ENCODE measurements at regions of chr13 and their contacts with region 1.

Region 1: DNA sequence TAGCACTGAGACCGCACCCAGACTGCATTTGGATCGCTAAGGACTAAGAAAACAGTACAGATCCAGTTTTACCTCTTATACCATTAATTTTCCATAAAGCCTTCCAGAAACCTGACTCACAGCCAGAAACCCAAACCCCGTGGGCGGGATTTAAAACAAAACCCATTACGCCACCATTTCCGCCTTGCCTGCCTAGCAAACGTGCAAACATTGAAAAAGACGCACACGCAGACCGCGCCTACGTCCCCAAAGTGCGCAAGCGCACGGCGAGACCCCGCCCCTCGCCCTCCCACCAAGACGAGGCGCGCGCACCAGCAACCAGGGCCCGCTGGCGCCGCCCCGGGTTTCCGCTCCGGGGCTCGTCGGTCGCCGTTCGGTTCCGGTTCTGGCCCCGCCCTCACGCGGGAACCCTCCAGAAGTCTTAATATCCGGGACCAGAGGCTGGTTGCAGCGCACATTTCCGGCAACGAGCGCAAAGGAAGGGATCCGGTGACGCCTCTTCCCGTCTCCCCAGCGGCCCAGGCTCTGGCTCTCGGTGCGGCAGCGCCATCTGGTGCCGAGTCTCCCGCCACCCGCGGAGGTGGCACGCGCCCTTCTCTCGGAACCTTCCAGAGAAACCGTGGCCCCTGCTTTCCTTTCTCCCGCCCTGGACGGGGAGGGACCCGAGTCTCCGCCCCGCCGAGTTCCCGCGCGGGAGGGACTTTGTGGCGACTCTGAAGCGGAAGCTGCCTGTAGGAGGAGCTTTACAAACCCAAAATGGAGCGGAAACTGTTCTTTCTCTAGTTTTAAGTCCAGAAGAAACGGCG is 256.9 kb upstream of the STARD13 start:
- DNase-seq: peak; percentile 98
- H3K4me3 Mint-ChIP-seq: peak overlapping the region; percentile 79
- H3K27ac Mint-ChIP-seq: peak overlapping the region; percentile 99
- H3K4me1 Mint-ChIP-seq: peaks cover 54% of the 10 kb centered on the region
- H3K27me3 Mint-ChIP-seq: no peaks in the 10 kb centered on the region

Region 2: DNA sequence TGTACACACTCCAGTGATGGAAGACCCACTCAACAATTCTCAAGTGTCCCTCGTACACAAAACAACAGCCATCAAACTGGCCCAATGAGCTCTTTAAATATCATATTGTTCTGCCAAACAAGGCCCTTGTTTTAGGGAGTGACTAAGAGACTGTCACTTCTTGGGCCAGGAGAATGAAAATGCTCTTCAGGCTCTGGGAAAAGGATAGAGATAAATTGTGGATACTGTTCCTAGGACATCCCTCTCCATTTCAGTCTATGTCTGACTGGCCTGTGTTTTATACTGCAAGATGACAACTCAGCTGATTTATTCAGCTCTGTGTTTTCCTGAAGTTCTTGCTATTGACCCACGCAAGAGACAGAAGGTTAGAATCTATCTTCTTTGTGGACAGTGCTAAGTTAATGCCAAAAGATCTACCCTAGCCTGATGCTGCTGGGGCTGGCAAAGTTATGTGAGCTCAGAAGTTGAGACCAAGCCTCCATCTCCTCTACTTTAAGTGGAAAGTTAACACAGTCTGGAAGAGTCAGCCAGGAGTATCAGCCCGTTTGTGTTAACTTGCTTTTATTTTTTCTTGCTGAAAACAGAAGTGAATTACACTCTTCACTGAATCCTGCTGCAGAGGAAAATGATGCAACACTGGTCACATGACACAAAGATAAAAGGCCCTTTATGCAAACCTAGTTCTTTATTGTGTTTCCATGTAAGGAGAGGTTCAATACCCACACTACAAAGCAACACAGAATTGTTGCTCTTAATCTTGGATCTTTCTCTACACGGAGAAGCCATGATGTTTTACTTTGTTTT is 1496.3 kb before region 1 on chr13:
- CTCF ChIA-PET with region 1: no interaction called
- intact Hi-C with region 1: loop called (anchors 5 kb)
- DNase-seq: peak; percentile 61
- H3K4me3 Mint-ChIP-seq: peak overlapping the region; percentile 55
- H3K27ac Mint-ChIP-seq: peak overlapping the region; percentile 93
- H3K4me1 Mint-ChIP-seq: peaks cover 69% of the 10 kb centered on the region
- H3K27me3 Mint-ChIP-seq: no peaks in the 10 kb centered on the region

Region 3: DNA sequence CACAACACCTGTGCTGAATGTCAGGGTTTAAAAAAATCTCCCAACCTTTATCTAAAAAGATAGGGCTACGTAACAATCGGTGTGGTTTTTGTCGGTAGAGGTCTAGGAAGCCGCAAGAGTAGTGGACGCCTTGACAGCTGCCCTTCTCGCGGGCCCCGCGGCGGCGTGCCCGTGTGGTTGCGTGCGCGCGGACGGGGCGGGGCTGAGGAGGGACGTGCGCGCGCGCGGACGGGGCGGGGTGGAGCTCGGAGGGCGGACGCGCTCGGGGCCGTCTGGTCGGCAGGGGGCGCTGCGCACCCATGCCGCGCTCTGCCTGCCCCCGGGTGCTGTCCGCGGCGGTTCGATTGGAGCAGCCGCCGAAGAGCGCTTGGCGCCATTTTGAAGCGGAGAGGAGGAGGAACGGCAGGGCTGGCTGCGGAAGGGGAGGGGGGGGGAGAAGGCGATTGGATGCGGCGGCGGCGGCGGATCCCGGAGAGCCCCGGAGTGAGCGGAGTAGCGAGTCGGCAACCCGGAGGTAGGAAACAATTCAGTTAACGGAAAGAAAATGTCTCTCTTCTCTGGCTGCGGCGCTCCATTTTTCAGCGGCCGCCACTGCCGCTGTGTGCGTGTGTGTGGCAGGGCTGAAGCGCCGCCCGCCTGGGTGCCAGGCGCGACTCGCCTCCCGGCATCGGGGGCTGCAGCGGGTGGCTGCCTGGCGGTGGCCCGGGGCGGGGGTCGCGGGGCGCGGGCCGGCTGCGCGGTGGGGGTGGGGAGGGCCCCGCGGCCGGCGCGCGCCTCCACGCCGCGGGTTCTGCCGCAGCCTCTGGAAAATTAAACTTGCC is 956.2 kb before region 1 on chr13 and contains the start of gene PDS5B:
- CTCF ChIA-PET with region 1: interaction called, 3 read pairs
- intact Hi-C with region 1: loop called (anchors 1 kb)
- DNase-seq: peak; percentile 95
- H3K4me3 Mint-ChIP-seq: peak within 1 kb of the TSS; percentile 95
- H3K27ac Mint-ChIP-seq: peak within 1 kb of the TSS; percentile 91
- H3K4me1 Mint-ChIP-seq: peaks cover 36% of the 10 kb centered on the region
- H3K27me3 Mint-ChIP-seq: no peaks in the 10 kb centered on the region
- total RNA-seq, gene PDS5B: 48.0 to 51.6 TPM

Region 4: DNA sequence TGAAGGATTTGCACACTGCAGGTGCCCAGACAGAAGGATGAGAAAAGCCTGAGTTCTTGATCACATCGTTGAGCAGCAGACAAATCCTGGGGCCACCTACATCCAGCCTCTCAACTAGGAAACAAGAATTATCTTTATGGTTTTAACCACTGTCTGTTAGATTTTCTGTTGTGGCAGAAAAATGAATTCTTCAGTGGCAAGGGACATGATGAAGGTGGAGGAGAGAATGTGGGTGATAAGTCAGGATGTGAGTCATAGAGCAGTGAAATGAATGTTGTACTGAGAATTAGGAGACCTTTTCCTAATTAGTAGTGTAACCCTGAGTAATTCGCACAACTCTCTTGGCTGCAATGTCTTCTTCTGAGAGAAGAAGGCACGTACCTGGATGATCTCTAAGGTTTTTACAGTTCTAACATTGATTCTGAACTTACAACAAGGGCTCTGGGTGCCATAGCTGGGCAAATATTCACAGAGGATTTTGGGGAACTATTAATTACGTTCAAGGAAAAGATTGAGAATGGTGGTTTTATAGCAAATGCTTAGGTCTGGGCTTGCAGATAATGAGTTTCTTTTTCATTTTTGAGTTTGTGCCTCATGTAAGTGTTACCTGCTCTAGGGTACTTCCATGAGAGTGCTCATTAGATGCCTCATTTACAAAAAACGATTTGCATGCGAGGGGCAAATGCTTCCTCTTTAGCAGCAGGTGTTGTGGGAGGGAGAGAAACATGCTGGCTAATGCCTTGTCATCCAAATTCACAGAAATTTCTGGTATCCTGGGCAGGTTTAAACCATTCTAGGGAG is 637.2 kb before region 1 on chr13:
- CTCF ChIA-PET with region 1: no interaction called
- intact Hi-C with region 1: loop called (anchors 1 kb)
- DNase-seq: peak; percentile 54
- H3K4me3 Mint-ChIP-seq: peak overlapping the region; percentile 51
- H3K27ac Mint-ChIP-seq: peak overlapping the region; percentile 86
- H3K4me1 Mint-ChIP-seq: peaks cover 29% of the 10 kb centered on the region
- H3K27me3 Mint-ChIP-seq: no peaks in the 10 kb centered on the region

Region 5: DNA sequence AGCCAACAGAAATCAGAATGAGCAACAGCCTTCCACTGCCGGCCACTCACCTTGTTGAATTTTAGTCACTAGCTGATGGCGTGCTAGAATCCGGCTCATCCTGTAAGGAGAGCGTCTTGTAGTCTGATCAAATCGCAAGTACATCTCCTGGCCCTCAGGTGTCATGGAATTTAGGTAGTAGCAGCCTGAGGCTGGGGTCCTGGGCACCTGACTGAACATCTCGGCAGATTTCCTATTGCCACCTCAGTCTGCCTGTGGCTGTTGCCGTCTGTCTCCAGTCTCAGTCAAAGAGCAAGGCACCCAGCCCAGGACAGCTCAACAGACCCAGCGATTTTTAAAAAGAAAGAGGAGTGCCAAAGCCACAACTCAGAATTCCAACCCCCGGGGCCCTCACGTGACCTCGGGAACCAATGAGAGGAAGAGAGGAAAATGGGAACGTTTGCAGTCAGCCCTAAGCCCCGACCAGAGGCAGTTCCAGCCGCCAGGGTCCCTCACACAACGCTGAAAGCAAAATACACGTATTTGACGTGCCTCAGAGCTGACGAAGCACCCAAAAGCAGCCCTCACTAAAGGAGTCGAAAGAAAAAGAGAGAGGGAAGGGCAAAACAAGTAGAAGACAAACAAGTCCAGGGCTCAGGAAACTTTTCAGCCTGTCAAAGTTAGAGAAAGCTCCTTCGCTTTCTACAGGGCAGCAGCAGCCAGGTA is 256.9 kb before region 1 on chr13 and contains the start of gene STARD13:
- CTCF ChIA-PET with region 1: no interaction called
- intact Hi-C with region 1: loop called (anchors 1 kb)
- DNase-seq: peak; percentile 27
- H3K4me3 Mint-ChIP-seq: peak within 1 kb of the TSS; percentile 73
- H3K27ac Mint-ChIP-seq: no peak within 1 kb of the TSS
- H3K4me1 Mint-ChIP-seq: peaks cover 14% of the 10 kb centered on the region
- H3K27me3 Mint-ChIP-seq: peaks cover 53% of the 10 kb centered on the region
- total RNA-seq, gene STARD13: 0.30 to 0.31 TPM

Region 6: DNA sequence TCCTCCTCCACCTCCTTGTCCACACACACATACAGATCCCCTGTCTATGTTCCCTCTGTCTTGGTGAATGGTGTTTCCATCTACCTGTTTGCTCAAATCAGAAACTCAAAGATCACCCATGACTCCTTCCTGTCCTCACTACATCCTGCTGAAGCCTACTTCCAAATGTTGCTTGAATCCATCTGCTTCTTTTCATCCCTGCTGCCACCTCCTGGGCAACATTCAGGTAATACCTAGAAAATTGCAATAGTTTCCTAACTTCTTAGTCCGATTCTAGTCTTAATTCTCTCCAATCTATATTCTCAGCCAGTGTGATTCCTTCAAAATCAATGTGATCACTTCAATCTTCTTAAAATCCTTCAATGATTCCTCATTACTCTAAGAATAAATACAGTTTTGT is 101.5 kb before region 1 on chr13:
- CTCF ChIA-PET with region 1: no interaction called
- intact Hi-C with region 1: no loop called
- DNase-seq: no peak
- H3K4me3 Mint-ChIP-seq: no peak overlapping the region
- H3K27ac Mint-ChIP-seq: no peak overlapping the region
- H3K4me1 Mint-ChIP-seq: no peaks in the 10 kb centered on the region
- H3K27me3 Mint-ChIP-seq: peaks cover 9% of the 10 kb centered on the region

Region 7: GRCh38 chr13:33466262-33466661 is 76.2 kb before region 1 on chr13:
- CTCF ChIA-PET with region 1: no interaction called
- intact Hi-C with region 1: no loop called
- DNase-seq: no peak
- H3K4me3 Mint-ChIP-seq: no peak overlapping the region
- H3K27ac Mint-ChIP-seq: no peak overlapping the region
- H3K4me1 Mint-ChIP-seq: no peaks in the 10 kb centered on the region
- H3K27me3 Mint-ChIP-seq: peaks cover 20% of the 10 kb centered on the region

Region 8: GRCh38 chr13:33582121-33582520 is 39.6 kb after region 1 on chr13:
- CTCF ChIA-PET with region 1: no interaction called
- intact Hi-C with region 1: no loop called
- DNase-seq: no peak
- H3K4me3 Mint-ChIP-seq: no peak overlapping the region
- H3K27ac Mint-ChIP-seq: no peak overlapping the region
- H3K4me1 Mint-ChIP-seq: no peaks in the 10 kb centered on the region
- H3K27me3 Mint-ChIP-seq: peaks cover 8% of the 10 kb centered on the region

Region 9: DNA sequence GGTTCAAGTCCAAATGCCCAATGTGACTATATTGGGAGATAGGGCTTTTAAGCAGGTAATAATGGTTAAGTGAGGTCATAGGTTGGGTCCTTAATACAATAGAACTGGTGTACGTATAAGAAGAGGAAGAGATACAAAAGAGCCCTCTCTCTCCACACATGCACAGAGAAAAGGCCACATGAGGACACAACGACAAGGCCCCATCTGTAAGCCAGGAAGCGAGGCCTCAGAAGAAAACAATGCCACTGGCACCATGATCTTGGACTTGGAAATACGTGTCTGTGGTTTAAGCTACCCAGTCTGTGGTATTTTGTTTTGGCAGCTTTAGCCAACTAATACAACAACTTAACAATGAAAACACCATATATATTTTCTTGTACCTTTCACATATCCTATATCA is 252.1 kb after region 1 on chr13:
- CTCF ChIA-PET with region 1: no interaction called
- intact Hi-C with region 1: no loop called
- DNase-seq: no peak
- H3K4me3 Mint-ChIP-seq: no peak overlapping the region
- H3K27ac Mint-ChIP-seq: no peak overlapping the region
- H3K4me1 Mint-ChIP-seq: no peaks in the 10 kb centered on the region
- H3K27me3 Mint-ChIP-seq: no peaks in the 10 kb centered on the region

Region 10: DNA sequence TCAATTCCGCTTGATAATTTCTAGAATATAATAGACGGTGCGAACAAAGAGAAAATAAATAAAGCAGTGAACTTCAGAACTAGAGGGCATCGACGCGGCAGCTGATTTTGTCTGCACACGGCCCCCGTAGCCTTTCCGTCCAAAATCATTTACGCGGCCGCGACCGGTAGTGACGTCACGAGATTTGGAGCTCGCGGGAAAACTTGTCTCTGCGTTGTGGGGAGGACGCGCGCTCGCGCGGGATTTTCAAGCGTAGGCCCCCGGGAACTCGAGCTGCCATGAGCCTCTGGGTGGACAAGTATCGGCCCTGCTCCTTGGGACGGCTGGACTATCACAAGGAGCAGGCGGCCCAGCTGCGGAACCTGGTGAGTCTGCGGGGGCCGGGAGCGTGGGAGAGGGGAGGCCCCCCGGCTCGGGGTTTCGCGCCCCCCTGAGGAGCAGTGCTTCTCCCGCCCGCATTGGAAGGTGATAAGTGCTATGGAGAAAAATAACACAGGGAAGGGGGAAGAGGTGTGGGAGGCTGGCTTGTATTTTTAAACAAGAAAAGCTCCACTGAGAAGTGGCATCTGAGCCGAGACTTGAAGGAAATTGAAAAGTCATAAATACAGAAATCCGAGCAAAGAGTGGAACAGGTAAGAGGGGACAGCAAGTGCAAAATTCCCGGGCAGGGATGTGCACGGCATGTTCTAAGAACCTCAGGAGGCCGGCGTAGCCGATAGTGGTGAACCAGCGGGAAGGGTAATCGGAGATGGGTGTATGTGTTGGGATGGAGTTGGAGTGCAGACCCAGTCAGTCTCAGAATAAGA is 275.6 kb after region 1 on chr13 and contains the start of gene RFC3:
- CTCF ChIA-PET with region 1: no interaction called
- intact Hi-C with region 1: loop called (anchors 1 kb)
- DNase-seq: peak; percentile 96
- H3K4me3 Mint-ChIP-seq: peak within 1 kb of the TSS; percentile 94
- H3K27ac Mint-ChIP-seq: peak within 1 kb of the TSS; percentile 90
- H3K4me1 Mint-ChIP-seq: peaks cover 27% of the 10 kb centered on the region
- H3K27me3 Mint-ChIP-seq: no peaks in the 10 kb centered on the region
- total RNA-seq, gene RFC3: 51.6 TPM

Measured in activated naive CD4-positive, alpha-beta T cell treated with anti-CD3 and anti-CD28 coated beads for 36 hours (primary cell).